Left cardiac atrium (tissue), 4 donors: ENCODE measurements at regions of chr22 and their contacts with region 1.

Region 1: GRCh38 chr22:25172153-25172552 is 27.5 kb upstream of the CRYBB3 start:
- DNase-seq: no peak
- ATAC-seq: peak; percentile 41 to 52

Region 2: GRCh38 chr22:25081409-25081824 is 90.7 kb before region 1 on chr22:
- intact Hi-C with region 1: loop called in 1 of 2 experiments (anchors 2 kb)
- DNase-seq: no peak
- ATAC-seq: no peak

Region 3: GRCh38 chr22:25110846-25111578 is 61.1 kb before region 1 on chr22:
- intact Hi-C with region 1: loop called in 1 of 2 experiments (anchors 2 kb)
- DNase-seq: peak; percentile 66
- ATAC-seq: peak; percentile 85 to 87